Dorsolateral prefrontal cortex (tissue), 120 donors: ENCODE measurements at regions of chr3 and their contacts with region 1.

Region 1: GRCh38 chr3:34260271-34261006 is 462.0 kb downstream of the PDCD6IP start:
- DNase-seq: peak in 7 of 10 donors; percentile 38 to 79 (median 57)
- H3K4me3 ChIP-seq: no peak overlapping the region
- H3K27ac ChIP-seq: peak overlapping the region in 55 of 59 donors; percentile 16 to 85 (median 62)
- H3K27me3 ChIP-seq: no peaks in the 10 kb centered on the region
- CTCF ChIP-seq: peak; percentile 30 to 72 (median 60)

Region 2: GRCh38 chr3:34200576-34200975 is 59.9 kb before region 1 on chr3:
- intact Hi-C with region 1: no loop called
- DNase-seq: no peak
- H3K4me3 ChIP-seq: no peak overlapping the region
- H3K27ac ChIP-seq: no peak overlapping the region
- H3K27me3 ChIP-seq: no peaks in the 10 kb centered on the region
- CTCF ChIP-seq: no peak

Region 3: DNA sequence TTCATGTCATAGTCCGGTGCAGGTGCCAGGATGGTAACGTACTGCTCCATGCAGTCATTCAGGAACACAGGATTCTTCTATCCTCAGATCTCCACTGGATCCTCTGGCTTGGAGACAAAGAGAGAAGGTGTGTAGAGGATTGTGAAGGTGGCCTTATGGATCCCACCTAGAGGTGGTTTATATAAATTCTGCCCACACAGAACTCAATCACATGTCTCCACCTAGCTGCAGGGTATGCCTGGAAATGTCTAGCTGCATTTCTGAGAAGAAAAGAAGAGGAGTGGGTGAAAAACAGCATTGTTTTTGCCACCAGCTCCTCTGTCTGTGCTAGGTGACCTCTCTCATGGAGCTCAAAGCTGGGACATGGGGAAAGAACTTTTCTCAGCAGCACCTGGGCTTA is 16.7 kb after region 1 on chr3:
- intact Hi-C with region 1: no loop called
- DNase-seq: no peak
- H3K4me3 ChIP-seq: no peak overlapping the region
- H3K27ac ChIP-seq: no peak overlapping the region
- H3K27me3 ChIP-seq: no peaks in the 10 kb centered on the region
- CTCF ChIP-seq: no peak

Region 4: GRCh38 chr3:34387826-34388564 is 127.6 kb after region 1 on chr3:
- intact Hi-C with region 1: loop called in 1 of 2 experiments (anchors 5 kb)
- DNase-seq: peak in 7 of 10 donors; percentile 17 to 89 (median 54)
- H3K4me3 ChIP-seq: no peak overlapping the region
- H3K27ac ChIP-seq: peak overlapping the region in 11 of 59 donors; percentile 6 to 81 (median 23)
- H3K27me3 ChIP-seq: no peaks in the 10 kb centered on the region
- CTCF ChIP-seq: peak in 4 of 56 donors; percentile 3 to 9 (median 8)

Region 5: GRCh38 chr3:34634939-34635338 is 374.5 kb after region 1 on chr3:
- intact Hi-C with region 1: no loop called
- DNase-seq: no peak
- H3K4me3 ChIP-seq: no peak overlapping the region
- H3K27ac ChIP-seq: no peak overlapping the region
- H3K27me3 ChIP-seq: no peaks in the 10 kb centered on the region
- CTCF ChIP-seq: no peak

Region 6: DNA sequence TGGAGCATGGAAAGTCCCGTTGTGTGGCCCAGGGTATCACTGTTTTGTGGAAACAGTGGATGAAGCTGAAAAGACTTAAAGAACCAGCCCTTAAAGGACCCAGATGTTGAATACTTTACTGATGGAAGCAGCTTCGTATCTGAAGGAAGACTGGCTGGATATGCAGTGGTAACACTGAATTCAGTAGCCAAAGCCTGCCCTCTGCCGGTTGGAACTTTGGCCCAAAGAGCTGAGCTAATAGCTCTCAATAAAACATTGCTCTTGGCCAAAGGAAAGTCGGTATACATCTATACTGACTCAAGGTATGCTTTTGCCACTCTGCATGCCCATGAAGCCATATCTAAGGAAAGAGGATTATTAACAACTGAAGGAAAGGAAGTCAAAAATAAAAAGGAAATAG is 423.4 kb after region 1 on chr3:
- intact Hi-C with region 1: loop called in 1 of 2 experiments (anchors 10 kb)
- DNase-seq: peak in 7 of 10 donors; percentile 10 to 64 (median 53)
- H3K4me3 ChIP-seq: no peak overlapping the region
- H3K27ac ChIP-seq: no peak overlapping the region
- H3K27me3 ChIP-seq: no peaks in the 10 kb centered on the region
- CTCF ChIP-seq: peak in 53 of 56 donors; percentile 17 to 77 (median 51)